Activated CD4-positive, alpha-beta T cell treated with anti-CD3 and anti-CD28 coated beads, Interleukin-2, amount 10 ng/mL, durations not matched to agents 24 days and 14 days (primary cell): ENCODE measurements at regions of chr17 and their contacts with region 1.

Region 1: GRCh38 chr17:10618202-10618635 is 38.9 kb downstream of the MYH3 start:
- DNase-seq: peak; percentile 88
- H3K4me3 Mint-ChIP-seq: no peak overlapping the region
- H3K27ac Mint-ChIP-seq: no peak overlapping the region
- H3K4me1 Mint-ChIP-seq: no peaks in the 10 kb centered on the region
- H3K27me3 Mint-ChIP-seq: no peaks in the 10 kb centered on the region

Region 2: GRCh38 chr17:9924735-9925191 is 693.5 kb before region 1 on chr17:
- intact Hi-C with region 1: loop called (anchors 5 kb)
- DNase-seq: peak; percentile 76
- H3K4me3 Mint-ChIP-seq: no peak overlapping the region
- H3K27ac Mint-ChIP-seq: no peak overlapping the region
- H3K4me1 Mint-ChIP-seq: no peaks in the 10 kb centered on the region
- H3K27me3 Mint-ChIP-seq: no peaks in the 10 kb centered on the region

Region 3: GRCh38 chr17:10295728-10296343 is 322.4 kb before region 1 on chr17:
- intact Hi-C with region 1: loop called (anchors 5 kb)
- DNase-seq: peak; percentile 72
- H3K4me3 Mint-ChIP-seq: no peak overlapping the region
- H3K27ac Mint-ChIP-seq: no peak overlapping the region
- H3K4me1 Mint-ChIP-seq: no peaks in the 10 kb centered on the region
- H3K27me3 Mint-ChIP-seq: no peaks in the 10 kb centered on the region

Region 4: DNA sequence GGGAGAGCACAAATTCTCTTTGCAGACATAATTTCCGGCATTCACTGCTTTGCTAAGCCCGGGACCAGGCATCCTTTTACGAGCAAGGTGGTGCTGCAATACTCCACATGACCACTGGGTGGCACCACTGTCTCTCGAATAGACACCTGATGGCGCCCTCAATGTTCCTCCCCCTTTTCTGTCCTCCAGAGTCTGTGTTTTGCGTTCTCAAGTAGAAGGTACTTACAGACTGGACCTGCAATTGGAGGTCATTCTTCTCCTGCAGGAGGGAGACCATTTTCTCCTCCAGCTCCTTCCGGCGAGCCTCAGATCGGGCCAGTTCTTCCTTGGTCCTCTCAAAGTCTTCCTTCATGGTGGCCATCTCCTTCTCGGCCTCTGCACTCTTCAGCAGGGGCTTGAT is 290.6 kb before region 1 on chr17:
- intact Hi-C with region 1: loop called (anchors 2 kb)
- DNase-seq: peak; percentile 91
- H3K4me3 Mint-ChIP-seq: no peak overlapping the region
- H3K27ac Mint-ChIP-seq: no peak overlapping the region
- H3K4me1 Mint-ChIP-seq: no peaks in the 10 kb centered on the region
- H3K27me3 Mint-ChIP-seq: no peaks in the 10 kb centered on the region

Region 5: GRCh38 chr17:10600571-10600970 is 17.6 kb before region 1 on chr17:
- intact Hi-C with region 1: no loop called
- DNase-seq: no peak
- H3K4me3 Mint-ChIP-seq: no peak overlapping the region
- H3K27ac Mint-ChIP-seq: no peak overlapping the region
- H3K4me1 Mint-ChIP-seq: no peaks in the 10 kb centered on the region
- H3K27me3 Mint-ChIP-seq: peaks cover 2% of the 10 kb centered on the region